ENCODE measurements at regions of chr2 and their contacts with region 1.

Region 1: GRCh38 chr2:45882707-45883602 is 231.5 kb downstream of the PRKCE start:
- DNase-seq: peak; percentile 95
- H3K4me3 ChIP-seq: no peak overlapping the region
- H3K27ac ChIP-seq: peak overlapping the region; percentile 61 to 88 (median 80)
- H3K4me1 ChIP-seq: peaks cover 0 to 86% (median 85%) of the 10 kb centered on the region in 4 donors
- H3K27me3 ChIP-seq: no peaks in the 10 kb centered on the region
- CTCF ChIP-seq: no peak
- EP300 ChIP-seq: peak; percentile 24 to 84 (median 70)
- POLR2A ChIP-seq: no peak

Region 2: GRCh38 chr2:45765728-45766254 is 117.2 kb before region 1 on chr2:
- intact Hi-C with region 1: loop called (anchors 5 kb)
- DNase-seq: no peak
- H3K4me3 ChIP-seq: no peak overlapping the region
- H3K27ac ChIP-seq: peak overlapping the region in 3 of 4 donors; percentile 47 to 68 (median 64)
- H3K4me1 ChIP-seq: peaks cover 0 to 60% (median 44%) of the 10 kb centered on the region in 4 donors
- H3K27me3 ChIP-seq: no peaks in the 10 kb centered on the region
- CTCF ChIP-seq: no peak
- EP300 ChIP-seq: no peak
- POLR2A ChIP-seq: no peak

Region 3: GRCh38 chr2:45821564-45822271 is 61.2 kb before region 1 on chr2:
- intact Hi-C with region 1: loop called (anchors 2 kb)
- DNase-seq: peak; percentile 88
- H3K4me3 ChIP-seq: no peak overlapping the region
- H3K27ac ChIP-seq: peak overlapping the region; percentile 71 to 87 (median 79)
- H3K4me1 ChIP-seq: peaks cover 0 to 95% (median 78%) of the 10 kb centered on the region in 4 donors
- H3K27me3 ChIP-seq: no peaks in the 10 kb centered on the region
- CTCF ChIP-seq: no peak
- EP300 ChIP-seq: peak in 2 of 4 donors; percentile 47 to 73
- POLR2A ChIP-seq: no peak

Measured in sigmoid colon (tissue), 7 donors.